Stomach (tissue), 19 donors: ENCODE measurements at regions of chr15 and their contacts with region 1.

Region 1: DNA sequence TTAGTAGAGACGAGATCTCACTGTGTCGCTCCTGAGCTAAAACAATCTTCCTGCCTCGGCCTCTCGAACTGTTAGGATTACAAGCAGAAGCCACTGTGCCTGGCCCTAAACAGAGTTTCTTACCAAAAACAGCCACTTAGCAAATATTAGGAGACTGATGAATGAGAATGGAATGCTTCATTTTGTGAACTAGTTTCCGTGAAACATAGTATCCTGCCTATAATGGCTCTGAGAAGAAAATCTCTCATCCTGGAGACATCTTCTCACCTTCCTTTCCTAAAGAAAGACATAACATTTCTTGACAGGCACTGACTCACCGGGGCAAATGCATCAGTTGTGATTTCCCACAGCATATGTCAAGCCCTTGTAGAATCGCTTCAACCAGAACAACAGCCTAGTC is 44.9 kb downstream of the GJD2 start:
- DNase-seq: no peak
- H3K4me3 ChIP-seq: no peak overlapping the region
- H3K27ac ChIP-seq: no peak overlapping the region
- H3K4me1 ChIP-seq: no peaks in the 10 kb centered on the region
- H3K27me3 ChIP-seq: peaks cover 0 to 16% (median 0%) of the 10 kb centered on the region in 3 donors
- CTCF ChIP-seq: no peak
- EP300 ChIP-seq: no peak
- POLR2A ChIP-seq: no peak

Region 2: DNA sequence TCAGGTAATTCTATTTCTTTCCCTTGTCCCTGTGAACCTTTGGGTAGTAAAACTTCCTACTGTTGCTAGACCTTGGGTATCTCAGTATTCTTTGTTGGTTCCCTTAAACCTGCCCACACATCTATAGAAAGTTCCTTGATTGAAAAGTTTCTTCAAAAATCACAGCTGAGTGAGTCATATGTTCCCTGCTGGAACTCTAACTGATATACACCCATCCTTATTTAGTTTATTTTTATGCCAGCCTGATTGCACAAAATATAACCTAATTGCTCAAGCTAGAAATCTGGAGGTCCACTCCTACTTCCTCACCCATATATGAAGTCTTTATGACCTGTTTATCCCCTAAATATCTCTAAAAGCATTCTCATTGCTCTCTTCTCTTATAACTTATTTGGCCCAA is 58.7 kb after region 1 on chr15:
- intact Hi-C with region 1: no loop called
- DNase-seq: no peak
- H3K4me3 ChIP-seq: no peak overlapping the region
- H3K27ac ChIP-seq: no peak overlapping the region
- H3K4me1 ChIP-seq: no peaks in the 10 kb centered on the region
- H3K27me3 ChIP-seq: peaks cover 0 to under 1% (median 0%) of the 10 kb centered on the region in 3 donors
- CTCF ChIP-seq: no peak
- EP300 ChIP-seq: no peak
- POLR2A ChIP-seq: no peak

Region 3: GRCh38 chr15:34855397-34855796 is 145.5 kb after region 1 on chr15:
- intact Hi-C with region 1: no loop called
- DNase-seq: peak in 1 of 2 donors; percentile 44
- H3K4me3 ChIP-seq: no peak overlapping the region
- H3K27ac ChIP-seq: no peak overlapping the region
- H3K4me1 ChIP-seq: peaks cover 0 to 46% (median 26%) of the 10 kb centered on the region in 4 donors
- H3K27me3 ChIP-seq: no peaks in the 10 kb centered on the region
- CTCF ChIP-seq: no peak
- EP300 ChIP-seq: no peak
- POLR2A ChIP-seq: no peak

Region 4: GRCh38 chr15:34927726-34928125 is 217.9 kb after region 1 on chr15:
- intact Hi-C with region 1: loop called (anchors 10 kb)
- DNase-seq: peak in 1 of 2 donors; percentile 30
- H3K4me3 ChIP-seq: no peak overlapping the region
- H3K27ac ChIP-seq: no peak overlapping the region
- H3K4me1 ChIP-seq: no peaks in the 10 kb centered on the region
- H3K27me3 ChIP-seq: no peaks in the 10 kb centered on the region
- CTCF ChIP-seq: no peak
- EP300 ChIP-seq: no peak
- POLR2A ChIP-seq: no peak